Lower leg skin (tissue), 4 donors: ENCODE measurements at regions of chr19 and their contacts with region 1.

Region 1: GRCh38 chr19:10502524-10503001 is 593 bp downstream of the KEAP1 start:
- DNase-seq: peak; percentile 90 to 99
- H3K4me3 ChIP-seq: peak overlapping the region; percentile 84
- CTCF ChIP-seq: no peak
- POLR2A ChIP-seq: peak in 1 of 2 donors; percentile 48

Region 2: GRCh38 chr19:10551698-10552301 is 49.2 kb after region 1 on chr19:
- intact Hi-C with region 1: loop called (anchors 10 kb)
- DNase-seq: no peak
- H3K4me3 ChIP-seq: no peak overlapping the region
- CTCF ChIP-seq: no peak
- POLR2A ChIP-seq: no peak

Region 3: DNA sequence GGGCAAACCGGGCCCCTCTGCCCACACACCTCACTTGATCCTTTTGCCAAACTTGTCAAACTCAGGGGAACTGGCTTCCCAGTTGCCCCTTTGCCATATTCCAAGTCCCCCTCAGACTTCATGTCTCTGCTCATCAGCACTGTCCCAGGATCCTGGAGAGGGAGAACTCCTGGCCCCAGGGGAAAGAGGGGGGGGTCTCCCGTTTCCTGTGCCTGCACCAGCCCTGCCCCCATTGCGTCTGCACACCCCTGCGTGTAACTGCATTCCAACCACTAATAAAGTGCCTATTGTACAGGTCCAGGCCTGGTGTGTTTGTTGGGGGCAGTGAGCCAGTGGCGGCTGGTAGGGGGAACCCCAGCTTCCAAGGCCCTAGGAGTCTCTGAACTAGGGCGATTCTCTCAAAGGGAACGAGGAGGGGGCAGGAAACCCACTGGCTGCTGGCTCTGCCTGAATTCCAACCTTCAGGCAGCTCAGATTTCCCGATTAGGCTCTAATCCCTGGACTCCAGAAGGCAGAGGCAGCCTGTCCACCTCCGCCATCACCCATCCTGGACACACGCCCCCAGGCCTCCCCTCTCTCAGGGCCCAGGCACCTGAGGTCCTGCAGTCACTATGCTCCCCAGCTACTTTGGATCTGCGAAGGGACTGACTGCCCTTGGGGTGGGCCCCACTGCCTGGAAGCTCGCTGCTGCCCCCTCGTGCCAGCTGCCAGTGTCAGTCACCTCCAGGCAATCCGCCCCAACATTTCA is 141.9 kb after region 1 on chr19:
- intact Hi-C with region 1: loop called (anchors 10 kb)
- DNase-seq: peak; percentile 75 to 96
- H3K4me3 ChIP-seq: no peak overlapping the region
- CTCF ChIP-seq: peak in 1 of 3 donors; percentile 67
- POLR2A ChIP-seq: no peak